Heart right ventricle (tissue), 16 donors: ENCODE measurements at regions of chr6 and their contacts with region 1.

Region 1: DNA sequence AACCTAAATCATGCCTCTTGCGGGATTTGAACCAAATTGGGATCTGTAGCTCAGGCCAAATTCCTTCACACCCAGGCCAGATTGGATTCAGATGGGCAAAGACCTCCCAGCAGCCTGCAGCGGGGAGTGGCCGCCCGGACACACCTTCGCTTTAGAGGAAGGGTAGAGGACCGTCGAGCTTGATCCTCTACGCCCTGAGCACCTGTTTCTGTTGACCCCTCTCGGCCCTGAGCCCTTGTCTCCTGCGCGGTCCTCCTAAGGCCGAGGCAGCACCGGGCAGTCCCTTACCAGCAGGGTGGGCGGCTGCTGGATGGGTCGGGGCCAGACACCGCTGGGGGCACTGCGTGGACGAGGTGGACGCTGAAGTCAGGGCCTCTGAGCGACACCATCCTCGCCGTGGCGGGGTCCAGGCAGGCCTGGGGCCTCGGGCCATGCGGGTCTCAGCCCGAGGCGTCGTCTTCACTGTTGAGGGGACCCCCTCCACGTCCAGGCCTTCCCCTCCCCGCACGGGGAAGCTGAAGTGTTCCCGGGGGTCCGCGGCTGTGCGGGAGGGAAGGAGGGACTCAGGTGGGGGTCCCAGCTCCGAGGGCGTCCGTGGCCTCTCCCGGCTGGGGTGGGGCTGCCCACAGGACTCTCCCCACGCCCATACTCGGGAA is 114.8 kb downstream of the SMOC2 start:
- DNase-seq: no peak
- ATAC-seq: peak in 2 of 8 donors; percentile 21 to 51
- H3K4me3 ChIP-seq: no peak overlapping the region
- H3K27ac ChIP-seq: no peak overlapping the region
- H3K4me1 ChIP-seq: peaks cover 0 to 22% (median 0%) of the 10 kb centered on the region in 9 donors
- H3K27me3 ChIP-seq: no peaks in the 10 kb centered on the region
- CTCF ChIP-seq: no peak

Region 2: DNA sequence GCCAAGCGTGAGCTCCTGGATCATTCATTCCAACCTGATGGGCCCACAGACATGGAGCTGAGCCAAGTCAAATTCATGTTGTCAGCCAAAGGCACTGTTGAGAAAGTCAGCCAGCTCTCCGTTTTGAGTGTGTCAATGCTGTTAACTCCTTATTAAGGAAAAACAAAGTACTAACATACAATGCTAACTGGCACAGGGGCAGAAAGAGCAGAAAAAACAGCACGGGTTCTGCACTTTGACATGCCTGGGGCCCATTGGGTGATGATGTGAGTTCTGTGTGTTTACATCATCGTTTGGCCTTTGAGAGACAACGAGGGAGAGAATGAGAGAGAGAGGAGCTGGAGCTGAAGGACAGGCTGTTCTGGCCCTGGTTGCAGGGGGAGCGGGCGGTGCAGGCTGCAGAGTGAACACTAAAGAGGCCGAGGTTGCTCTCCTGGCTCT is 28.9 kb before region 1 on chr6:
- intact Hi-C with region 1: loop called in 1 of 10 experiments (anchors 2 kb)
- DNase-seq: peak; percentile 28 to 50
- ATAC-seq: peak; percentile 56 to 97 (median 84)
- H3K4me3 ChIP-seq: no peak overlapping the region
- H3K27ac ChIP-seq: peak overlapping the region in 9 of 10 donors; percentile 34 to 68 (median 60)
- H3K4me1 ChIP-seq: peaks cover 5 to 29% (median 23%) of the 10 kb centered on the region in 9 donors
- H3K27me3 ChIP-seq: no peaks in the 10 kb centered on the region
- CTCF ChIP-seq: no peak